BJ (cell line): ENCODE measurements at regions of chr6 and their contacts with region 1.

Region 1: DNA sequence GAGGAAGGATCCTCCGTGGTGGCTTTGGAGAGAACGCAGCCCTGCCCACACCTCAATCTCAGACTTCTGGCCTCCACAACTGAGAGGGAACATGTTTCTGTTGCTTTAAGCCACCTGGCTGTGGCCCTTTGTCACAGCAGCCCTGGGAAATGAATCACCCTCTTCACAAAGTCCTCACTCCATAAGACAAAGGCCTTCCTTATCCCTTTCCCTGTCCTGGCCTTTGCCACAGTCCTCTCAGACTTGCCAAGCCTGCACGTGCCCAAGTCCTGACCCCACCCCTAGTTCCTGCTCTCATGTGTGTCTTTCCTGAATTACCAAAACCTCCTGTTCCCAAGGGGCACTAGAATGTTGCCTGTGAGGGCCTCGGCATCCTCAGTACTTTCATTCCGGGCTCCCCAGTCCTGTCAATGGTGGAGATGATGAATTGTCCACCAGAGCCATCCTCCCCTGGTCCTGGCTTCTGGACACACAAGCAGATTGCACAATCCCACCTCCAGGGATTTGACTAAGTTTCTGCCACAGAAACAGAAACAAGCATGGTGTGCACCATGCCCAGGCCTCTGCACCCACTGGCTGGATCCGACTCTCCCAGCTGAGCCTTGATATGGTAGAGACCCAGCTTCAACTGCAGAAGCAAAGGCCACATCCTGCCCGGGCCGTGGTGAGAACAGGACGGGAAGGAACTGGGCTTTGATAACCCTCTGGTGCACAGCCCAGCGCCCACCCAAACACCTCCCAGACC is 232.6 kb upstream of the PDE10A start:
- DNase-seq: no peak
- H3K4me3 ChIP-seq: no peak overlapping the region
- H3K27me3 ChIP-seq: no peaks in the 10 kb centered on the region
- CTCF ChIP-seq: no peak

Region 2: GRCh38 chr6:166097915-166098522 is 202.4 kb after region 1 on chr6:
- CTCF ChIA-PET with region 1: interaction called, 60 read pairs
- POLR2A ChIA-PET with region 1: interaction called, 10 read pairs
- DNase-seq: no peak
- H3K4me3 ChIP-seq: no peak overlapping the region
- H3K27me3 ChIP-seq: no peaks in the 10 kb centered on the region
- CTCF ChIP-seq: peak; percentile 94